Adrenal gland (tissue), 19 donors: ENCODE measurements at regions of chr22 and their contacts with region 1.

Region 1: DNA sequence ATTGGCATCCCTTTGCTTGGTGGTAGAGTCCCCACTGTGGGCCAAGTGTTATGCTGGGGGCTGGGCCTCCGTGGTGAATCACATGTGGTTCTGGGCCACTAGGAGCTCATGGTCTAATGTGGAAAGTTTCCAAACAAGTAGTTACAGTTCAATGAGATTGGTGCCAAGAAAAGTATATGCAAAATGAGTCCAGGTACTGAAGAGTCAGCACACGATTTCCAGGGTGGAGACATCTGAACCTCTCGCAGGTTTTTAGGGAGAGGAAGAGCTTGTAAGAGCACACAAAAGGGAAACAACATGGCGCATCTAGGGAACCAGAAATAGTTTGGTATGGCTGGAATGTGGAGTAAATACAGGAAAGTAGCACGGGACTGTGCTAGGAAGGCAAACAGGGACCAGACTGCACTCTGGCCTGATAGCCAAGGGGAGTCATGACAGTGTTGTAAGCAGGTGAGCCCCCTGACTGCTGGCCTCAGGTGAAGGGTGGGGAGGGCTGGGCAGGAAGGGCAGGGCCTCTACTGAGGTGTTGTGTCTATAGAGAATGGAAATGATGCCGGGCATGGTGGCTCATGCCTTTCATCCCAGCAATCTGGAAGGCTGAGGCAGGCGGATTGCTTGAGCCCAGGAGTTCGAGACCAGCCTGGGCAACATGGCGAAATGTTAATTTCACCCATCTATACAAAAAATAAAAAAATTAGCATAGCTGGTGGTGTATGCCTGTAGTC is 12.6 kb downstream of the POLR2F start:
- DNase-seq: no peak
- H3K4me3 ChIP-seq: no peak overlapping the region
- H3K27ac ChIP-seq: no peak overlapping the region
- H3K4me1 ChIP-seq: no peaks in the 10 kb centered on the region
- H3K27me3 ChIP-seq: no peaks in the 10 kb centered on the region
- CTCF ChIP-seq: no peak
- POLR2A ChIP-seq: no peak

Region 2: GRCh38 chr22:37777122-37777687 is 188.9 kb before region 1 on chr22:
- intact Hi-C with region 1: no loop called
- DNase-seq: peak in 6 of 7 donors; percentile 65 to 78 (median 74)
- H3K4me3 ChIP-seq: no peak overlapping the region
- H3K27ac ChIP-seq: peak overlapping the region in 1 of 5 donors; percentile 23
- H3K4me1 ChIP-seq: peaks cover 3 to 8% of the 10 kb centered on the region in 2 donors
- H3K27me3 ChIP-seq: no peaks in the 10 kb centered on the region
- CTCF ChIP-seq: no peak
- POLR2A ChIP-seq: no peak

Region 3: DNA sequence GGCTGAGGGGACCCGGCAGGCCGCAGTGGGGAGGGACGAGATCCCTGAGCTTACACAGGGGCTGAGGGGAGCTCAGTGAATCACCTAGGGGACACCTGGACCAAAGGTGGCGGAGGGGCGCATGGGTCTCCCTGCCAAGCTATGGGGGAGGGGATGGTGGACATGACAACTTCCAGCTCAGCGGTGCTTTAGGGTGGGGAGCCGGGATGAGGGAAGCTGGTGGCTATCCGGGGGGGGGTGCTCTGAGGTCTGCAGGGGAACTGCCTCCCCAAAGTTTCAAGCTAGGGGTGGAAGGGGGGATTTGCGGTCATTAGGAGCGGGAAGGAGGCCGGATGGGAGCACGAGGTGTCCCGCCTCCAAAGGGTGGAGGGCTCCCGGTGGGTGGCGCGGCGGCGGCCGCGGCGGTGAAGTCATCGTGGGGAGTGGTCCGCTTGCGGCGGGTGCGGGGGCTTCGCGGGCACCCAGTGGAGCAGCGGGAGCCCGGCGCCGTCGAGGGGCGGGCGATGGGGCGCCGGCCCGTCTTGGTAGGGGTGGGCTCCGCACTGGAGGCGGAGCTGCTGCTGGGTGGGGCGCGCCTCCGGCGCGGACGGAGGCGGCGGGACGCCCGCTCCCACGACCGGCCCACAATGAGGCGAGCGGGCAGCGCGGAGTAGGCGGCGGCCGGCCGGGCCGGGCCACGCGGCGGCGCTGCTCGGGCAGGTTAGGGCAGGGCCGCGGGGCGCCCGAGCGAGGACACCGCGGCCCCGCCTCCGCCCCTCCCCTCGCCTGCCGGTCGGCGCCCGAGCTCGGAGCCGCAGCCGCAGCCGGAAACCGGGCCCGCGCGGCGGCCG is 60.4 kb before region 1 on chr22 and contains the start of gene MICALL1:
- intact Hi-C with region 1: loop called in 1 of 2 experiments (anchors 10 kb)
- DNase-seq: peak; percentile 48 to 78 (median 68)
- H3K4me3 ChIP-seq: peak within 1 kb of the TSS in 3 of 4 donors; percentile 4 to 97 (median 31)
- H3K27ac ChIP-seq: peak within 1 kb of the TSS in 4 of 5 donors; percentile 19 to 90 (median 64)
- H3K4me1 ChIP-seq: peaks cover 6 to 20% of the 10 kb centered on the region in 2 donors
- H3K27me3 ChIP-seq: no peaks in the 10 kb centered on the region
- CTCF ChIP-seq: peak in 3 of 6 experiments; percentile 22 to 45 (median 29)
- POLR2A ChIP-seq: peak in 1 of 2 donors; percentile 35
- total RNA-seq, gene MICALL1: 6.3 to 25.2 (median 17.3) TPM

Region 4: GRCh38 chr22:38026130-38027111 is 60.3 kb after region 1 on chr22:
- intact Hi-C with region 1: no loop called
- DNase-seq: no peak
- H3K4me3 ChIP-seq: no peak overlapping the region
- H3K27ac ChIP-seq: no peak overlapping the region
- H3K4me1 ChIP-seq: no peaks in the 10 kb centered on the region
- H3K27me3 ChIP-seq: no peaks in the 10 kb centered on the region
- CTCF ChIP-seq: no peak
- POLR2A ChIP-seq: no peak